ENCODE measurements at regions of chr4 and their contacts with region 1.

Region 1: GRCh38 chr4:155953151-155954114 is at the start of gene CTSO:
- DNase-seq: peak; percentile 62
- H3K4me3 ChIP-seq: peak within 1 kb of the TSS; percentile 86 to 98 (median 92)
- H3K27ac ChIP-seq: peak within 1 kb of the TSS; percentile 81
- H3K4me1 ChIP-seq: peaks cover 6% of the 10 kb centered on the region
- H3K27me3 ChIP-seq: no peaks in the 10 kb centered on the region
- CTCF ChIP-seq: peak; percentile 28 to 64
- total RNA-seq, gene CTSO: 2.0 to 11.0 TPM

Region 2: DNA sequence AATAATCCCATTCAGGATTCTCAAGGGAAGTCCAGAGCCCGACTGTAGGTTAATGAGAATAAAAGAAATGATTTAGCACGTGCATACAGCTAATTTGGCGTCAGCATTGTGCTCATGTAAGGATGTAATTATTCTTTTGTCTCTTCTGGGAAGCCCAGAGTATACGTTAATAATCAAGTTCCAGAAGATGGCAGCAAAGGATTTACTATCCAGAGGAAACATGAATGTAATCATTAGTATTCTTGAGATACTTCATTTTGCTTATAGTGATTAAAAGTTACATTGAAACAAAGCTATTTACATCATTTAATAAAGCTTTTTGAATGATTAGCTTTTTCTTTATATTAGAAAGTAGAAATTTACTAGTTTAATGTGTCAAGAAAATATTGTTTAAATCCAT is 549.5 kb before region 1 on chr4:
- CTCF ChIA-PET with region 1: no interaction called
- dilution Hi-C with region 1: no loop called
- in situ Hi-C with region 1: no loop called
- intact Hi-C with region 1: loop called (anchors 1 kb)
- DNase-seq: peak; percentile 23
- H3K4me3 ChIP-seq: no peak overlapping the region
- H3K27ac ChIP-seq: no peak overlapping the region
- H3K4me1 ChIP-seq: no peaks in the 10 kb centered on the region
- H3K27me3 ChIP-seq: peaks cover 2% of the 10 kb centered on the region
- CTCF ChIP-seq: peak in 1 of 2 donors; percentile 50

Region 3: GRCh38 chr4:155442267-155443105 is 510.9 kb before region 1 on chr4:
- CTCF ChIA-PET with region 1: no interaction called
- dilution Hi-C with region 1: no loop called
- in situ Hi-C with region 1: no loop called
- intact Hi-C with region 1: loop called (anchors 10 kb)
- DNase-seq: peak; percentile 59
- H3K4me3 ChIP-seq: peak overlapping the region in 1 of 3 experiments; percentile 10
- H3K27ac ChIP-seq: no peak overlapping the region
- H3K4me1 ChIP-seq: no peaks in the 10 kb centered on the region
- H3K27me3 ChIP-seq: no peaks in the 10 kb centered on the region
- CTCF ChIP-seq: peak; percentile 97 to 99

Region 4: GRCh38 chr4:155809835-155810234 is 143.6 kb before region 1 on chr4:
- CTCF ChIA-PET with region 1: no interaction called
- dilution Hi-C with region 1: no loop called
- in situ Hi-C with region 1: loop called (anchors 10 kb)
- intact Hi-C with region 1: loop called (anchors 1 kb)
- DNase-seq: peak; percentile 59
- H3K4me3 ChIP-seq: no peak overlapping the region
- H3K27ac ChIP-seq: no peak overlapping the region
- H3K4me1 ChIP-seq: no peaks in the 10 kb centered on the region
- H3K27me3 ChIP-seq: no peaks in the 10 kb centered on the region
- CTCF ChIP-seq: peak; percentile 48 to 68

Region 5: GRCh38 chr4:155889031-155889793 is 64.2 kb before region 1 on chr4:
- CTCF ChIA-PET with region 1: no interaction called
- dilution Hi-C with region 1: no loop called
- in situ Hi-C with region 1: no loop called
- intact Hi-C with region 1: no loop called
- DNase-seq: peak; percentile 36
- H3K4me3 ChIP-seq: no peak overlapping the region
- H3K27ac ChIP-seq: no peak overlapping the region
- H3K4me1 ChIP-seq: no peaks in the 10 kb centered on the region
- H3K27me3 ChIP-seq: no peaks in the 10 kb centered on the region
- CTCF ChIP-seq: no peak

Region 6: GRCh38 chr4:156084373-156084772 is 130.9 kb after region 1 on chr4:
- CTCF ChIA-PET with region 1: no interaction called
- dilution Hi-C with region 1: no loop called
- in situ Hi-C with region 1: no loop called
- intact Hi-C with region 1: no loop called
- DNase-seq: no peak
- H3K4me3 ChIP-seq: no peak overlapping the region
- H3K27ac ChIP-seq: no peak overlapping the region
- H3K4me1 ChIP-seq: no peaks in the 10 kb centered on the region
- H3K27me3 ChIP-seq: peaks cover 2% of the 10 kb centered on the region
- CTCF ChIP-seq: no peak

Region 7: GRCh38 chr4:156116991-156117390 is 163.6 kb after region 1 on chr4:
- CTCF ChIA-PET with region 1: interaction called, 10 read pairs
- dilution Hi-C with region 1: no loop called
- in situ Hi-C with region 1: no loop called
- intact Hi-C with region 1: no loop called
- DNase-seq: no peak
- H3K4me3 ChIP-seq: no peak overlapping the region
- H3K27ac ChIP-seq: no peak overlapping the region
- H3K4me1 ChIP-seq: peaks cover 14% of the 10 kb centered on the region
- H3K27me3 ChIP-seq: no peaks in the 10 kb centered on the region
- CTCF ChIP-seq: no peak

Measured in mammary epithelial cell (primary cell).